Naive thymus-derived CD4-positive, alpha-beta T cell (primary cell): ENCODE measurements at regions of chr20 and their contacts with region 1.

Region 1: GRCh38 chr20:4684837-4685413 is 36.8 kb upstream of the PRND start:
- DNase-seq: no peak
- ATAC-seq: no peak
- H3K4me3 ChIP-seq: no peak overlapping the region
- H3K4me3 Mint-ChIP-seq: peak overlapping the region in 9 of 10 donors; percentile 16 to 88 (median 85)
- H3K27ac ChIP-seq: peak overlapping the region; percentile 93
- H3K27ac Mint-ChIP-seq: peak overlapping the region; percentile 41 to 98 (median 89)
- H3K4me1 ChIP-seq: peaks cover 28 to 30% of the 10 kb centered on the region in 2 donors
- H3K4me1 Mint-ChIP-seq: peaks cover 35 to 59% (median 53%) of the 10 kb centered on the region in 7 donors
- H3K27me3 ChIP-seq: no peaks in the 10 kb centered on the region
- H3K27me3 Mint-ChIP-seq: peaks cover 0 to 13% (median 0%) of the 10 kb centered on the region in 5 donors

Region 2: GRCh38 chr20:4666001-4666479 is 18.9 kb before region 1 on chr20:
- CTCF ChIA-PET with region 1: no interaction called
- POLR2A ChIA-PET with region 1: interaction called, 4 read pairs
- intact Hi-C with region 1: loop called in 1 of 2 experiments (anchors 2 kb)
- DNase-seq: peak in 2 of 9 donors; percentile 17 to 40
- ATAC-seq: peak; percentile 86
- H3K4me3 ChIP-seq: peak overlapping the region; percentile 46
- H3K4me3 Mint-ChIP-seq: peak overlapping the region in 9 of 10 donors; percentile 4 to 81 (median 43)
- H3K27ac ChIP-seq: no peak overlapping the region
- H3K27ac Mint-ChIP-seq: peak overlapping the region in 5 of 9 donors; percentile 21 to 87 (median 29)
- H3K4me1 ChIP-seq: peaks cover 10 to 17% of the 10 kb centered on the region in 2 donors
- H3K4me1 Mint-ChIP-seq: peaks cover 4 to 44% (median 13%) of the 10 kb centered on the region in 7 donors
- H3K27me3 ChIP-seq: no peaks in the 10 kb centered on the region
- H3K27me3 Mint-ChIP-seq: peaks cover 0 to 12% (median 0%) of the 10 kb centered on the region in 5 donors